Pancreas (tissue), 10 donors: ENCODE measurements at regions of chr18 and their contacts with region 1.

Region 1: DNA sequence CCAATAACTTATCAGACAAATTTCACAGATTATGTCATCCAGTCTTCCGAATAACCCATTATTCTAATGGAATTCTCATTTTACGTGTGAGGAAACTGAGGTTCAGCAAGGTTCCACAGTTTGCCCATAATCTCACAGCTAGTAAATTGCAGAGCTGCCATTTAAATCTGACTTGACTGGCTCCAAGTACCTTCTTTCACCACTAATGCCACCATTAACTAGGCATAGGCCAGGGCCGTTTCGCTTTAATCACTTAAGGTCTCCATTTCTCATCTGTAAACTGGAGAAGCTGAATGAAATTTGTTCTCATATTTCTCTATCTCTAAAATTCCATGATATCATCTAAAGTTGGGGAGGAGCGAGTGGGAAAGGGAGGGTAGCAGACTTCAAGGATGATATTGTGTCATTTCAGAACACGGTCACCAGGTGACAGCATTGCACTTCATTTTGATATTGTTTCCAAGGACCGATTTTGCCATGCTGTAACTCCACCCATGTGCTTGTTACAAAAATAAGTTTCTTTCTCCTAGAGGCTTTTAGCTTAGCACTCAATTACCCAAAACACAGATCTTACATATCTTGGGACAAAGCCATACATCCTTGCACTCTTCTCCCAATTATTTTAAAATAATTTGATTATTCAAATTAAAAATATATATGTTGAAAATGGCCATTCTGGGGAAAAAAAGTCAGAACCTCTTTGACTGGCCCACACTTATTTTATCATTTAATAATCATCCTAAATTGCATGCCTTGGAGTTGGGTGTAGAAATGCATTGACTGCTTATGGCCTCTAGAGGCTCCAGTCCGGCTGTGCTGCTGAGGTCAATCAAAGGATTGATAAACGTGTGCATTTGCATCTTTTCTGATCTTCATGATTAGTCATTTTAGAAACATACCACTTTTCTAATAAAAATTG is 123.8 kb downstream of the AKAIN1 start:
- DNase-seq: no peak
- ATAC-seq: peak; percentile 48 to 90 (median 82)
- H3K4me3 ChIP-seq: no peak overlapping the region
- H3K27ac ChIP-seq: no peak overlapping the region
- H3K4me1 ChIP-seq: no peaks in the 10 kb centered on the region
- H3K27me3 ChIP-seq: no peaks in the 10 kb centered on the region
- CTCF ChIP-seq: peak in 2 of 4 donors; percentile 10 to 18

Region 2: DNA sequence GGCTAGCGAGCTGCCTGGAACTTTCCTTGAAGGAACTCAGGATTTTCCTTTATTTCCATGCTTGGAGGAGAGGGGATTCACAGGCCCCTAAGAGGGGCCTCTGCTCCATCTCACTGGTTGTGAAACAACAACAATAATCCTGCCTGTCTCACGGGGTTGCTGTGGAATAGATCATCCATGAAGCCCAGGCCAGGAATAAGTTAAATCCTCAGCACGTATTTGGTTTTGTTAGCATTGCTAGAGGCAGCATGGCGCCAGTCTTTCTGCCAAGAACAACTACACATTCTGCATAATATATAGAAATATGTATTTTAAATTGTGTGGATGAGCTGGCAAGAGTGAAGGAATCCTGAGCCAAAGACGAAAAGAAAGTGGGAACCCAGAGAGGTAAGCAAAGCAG is 1422.3 kb after region 1 on chr18:
- intact Hi-C with region 1: loop called in 1 of 3 experiments (anchors 10 kb)
- DNase-seq: no peak
- ATAC-seq: no peak
- H3K4me3 ChIP-seq: no peak overlapping the region
- H3K27ac ChIP-seq: no peak overlapping the region
- H3K4me1 ChIP-seq: no peaks in the 10 kb centered on the region
- H3K27me3 ChIP-seq: no peaks in the 10 kb centered on the region
- CTCF ChIP-seq: no peak